GM23248 (cell line): ENCODE measurements at regions of chrX and their contacts with region 1.

Region 1: DNA sequence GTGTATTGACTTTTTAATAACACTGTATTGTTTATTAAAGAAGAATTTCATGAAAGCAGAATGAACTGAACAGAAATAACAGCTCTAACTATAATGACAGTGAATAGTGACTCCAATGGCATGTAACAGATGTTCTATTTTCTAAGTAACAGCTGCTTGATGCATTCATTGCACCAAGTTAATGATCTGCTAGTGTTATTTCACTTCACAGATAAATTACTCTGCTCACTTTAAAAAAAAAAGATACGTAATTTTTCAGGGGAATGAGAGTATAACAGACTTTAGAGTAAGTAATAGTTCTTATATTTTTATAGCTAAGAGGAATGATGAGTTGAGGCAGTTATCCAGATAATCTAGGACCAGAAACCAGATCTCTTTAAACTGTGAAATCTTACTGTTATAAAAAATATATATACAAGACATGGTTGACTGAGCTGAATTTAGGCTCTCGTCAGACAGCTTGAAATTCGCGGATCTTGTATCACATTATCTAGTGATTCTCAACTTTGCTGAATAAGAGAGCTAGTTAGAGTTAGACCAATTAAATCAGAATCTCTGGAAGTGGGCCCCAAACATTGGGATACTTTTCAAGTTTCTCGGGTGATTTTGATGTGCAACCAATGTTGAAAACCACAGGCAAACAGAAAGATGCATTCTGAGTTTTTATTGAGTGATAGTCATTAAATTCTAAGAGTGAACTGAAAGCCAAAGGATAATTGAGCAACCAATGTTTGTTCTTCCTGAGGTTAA is 840.7 kb downstream of the DMD start:
- DNase-seq: no peak
- H3K4me3 ChIP-seq: no peak overlapping the region
- H3K27ac ChIP-seq: no peak overlapping the region
- H3K4me1 ChIP-seq: no peaks in the 10 kb centered on the region
- H3K27me3 ChIP-seq: no peaks in the 10 kb centered on the region

Region 2: DNA sequence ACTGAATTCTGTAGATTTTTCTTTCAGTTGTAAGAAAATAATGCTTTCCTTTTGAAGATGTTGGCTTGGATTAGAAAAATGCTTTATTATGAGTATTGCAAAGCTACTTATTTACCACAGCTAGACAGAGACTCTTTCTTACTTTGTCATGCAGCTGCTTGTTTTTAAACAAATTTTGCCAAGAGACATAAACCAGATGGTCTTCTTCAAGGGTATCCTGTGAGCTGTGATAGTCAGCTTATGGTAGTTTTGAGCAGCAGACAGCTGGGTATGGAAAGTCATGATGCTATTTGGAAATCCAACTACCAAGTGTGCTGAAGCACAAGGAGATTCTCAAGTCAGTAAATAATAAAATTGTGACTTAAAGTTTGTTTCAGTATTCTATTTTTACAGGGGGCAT is 100.8 kb before region 1 on chrX:
- in situ Hi-C with region 1: loop called (anchors 25 kb)
- DNase-seq: no peak
- H3K4me3 ChIP-seq: no peak overlapping the region
- H3K27ac ChIP-seq: no peak overlapping the region
- H3K4me1 ChIP-seq: no peaks in the 10 kb centered on the region
- H3K27me3 ChIP-seq: no peaks in the 10 kb centered on the region